Ascending aorta (tissue), 2 donors: ENCODE measurements at regions of chr3 and their contacts with region 1.

Region 1: DNA sequence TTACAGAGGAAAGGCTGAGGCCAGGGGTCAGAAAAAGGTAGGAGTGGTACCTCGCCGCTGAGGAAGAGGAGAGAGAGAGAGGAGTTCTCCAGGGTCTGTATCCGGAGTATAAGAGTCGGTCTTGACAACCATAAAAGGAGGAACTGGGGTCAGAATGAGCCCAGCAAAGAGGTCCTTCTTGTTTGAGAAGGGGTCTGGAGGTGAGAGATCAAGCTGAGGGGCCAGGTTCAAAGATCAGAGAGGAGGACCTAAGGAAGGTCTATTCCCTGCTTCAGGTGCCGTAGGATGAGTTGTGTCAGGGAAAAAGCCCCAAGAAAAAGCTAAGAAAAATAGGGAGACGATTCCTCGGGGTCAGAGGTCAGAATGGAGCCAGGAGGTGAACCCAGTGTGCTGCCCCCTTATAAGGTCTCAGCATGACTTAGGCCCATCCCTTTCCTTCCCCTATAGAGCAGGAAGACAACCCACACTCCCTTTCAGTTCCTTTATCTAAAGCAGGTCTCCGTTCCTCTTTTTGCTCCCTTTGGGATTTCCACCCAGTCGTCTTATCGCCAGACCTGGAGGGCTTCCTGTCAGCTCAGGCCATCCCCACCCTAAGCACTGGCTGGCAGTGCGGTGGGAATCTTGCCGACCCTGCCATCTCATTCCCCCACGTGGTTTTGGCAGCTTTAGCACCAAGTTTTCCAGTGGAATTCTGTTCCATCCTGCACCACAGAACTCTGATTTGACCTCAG is 651 bp downstream of the MTMR14 start:
- DNase-seq: peak in 1 of 2 donors; percentile 61
- H3K4me3 ChIP-seq: peak overlapping the region; percentile 92 to 97
- H3K27ac ChIP-seq: peak overlapping the region; percentile 86 to 87
- H3K4me1 ChIP-seq: peaks cover 3 to 5% of the 10 kb centered on the region in 2 donors
- H3K27me3 ChIP-seq: no peaks in the 10 kb centered on the region
- CTCF ChIP-seq: no peak

Region 2: DNA sequence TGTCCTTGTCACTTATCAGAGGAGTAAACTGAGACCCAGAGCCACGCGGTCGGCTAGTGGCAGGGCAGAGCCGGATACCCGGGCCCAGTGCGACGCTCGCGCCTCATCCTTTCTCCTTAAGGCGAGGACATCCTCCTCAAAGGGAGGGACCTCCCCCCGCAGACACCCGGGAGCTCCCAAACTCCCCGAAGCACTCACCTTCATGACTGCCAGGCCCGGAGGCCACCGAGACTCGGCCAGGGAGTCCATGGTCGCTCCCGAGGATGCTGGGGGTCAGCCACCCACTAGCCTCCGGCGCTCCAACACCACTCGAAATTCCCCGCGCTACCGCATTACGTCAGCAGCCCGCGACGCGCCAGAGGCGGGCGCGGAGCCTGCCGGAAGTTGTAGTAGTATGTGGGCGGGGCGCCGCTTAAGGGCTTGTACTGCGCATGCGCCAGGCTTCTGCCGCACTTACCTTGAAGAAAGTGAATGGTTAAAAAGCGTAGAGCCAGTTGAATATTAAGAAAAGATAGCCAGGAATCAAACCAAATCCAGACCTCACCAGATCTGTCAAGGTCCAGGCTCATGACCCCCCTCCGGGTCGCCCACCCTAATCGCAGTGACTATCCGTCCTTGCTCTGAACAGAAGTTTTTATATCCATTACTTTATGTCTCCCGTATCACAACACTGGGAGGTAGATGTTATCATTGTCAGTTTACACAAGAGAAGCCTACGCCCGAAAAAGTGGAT is 686.7 kb before region 1 on chr3 and contains the start of gene RAD18:
- intact Hi-C with region 1: loop called (anchors 5 kb)
- DNase-seq: peak; percentile 59 to 95
- H3K4me3 ChIP-seq: peak within 1 kb of the TSS; percentile 81 to 82
- H3K27ac ChIP-seq: peak within 1 kb of the TSS; percentile 65 to 79
- H3K4me1 ChIP-seq: peaks cover 0 to 13% of the 10 kb centered on the region in 2 donors
- H3K27me3 ChIP-seq: no peaks in the 10 kb centered on the region
- CTCF ChIP-seq: no peak
- total RNA-seq, gene RAD18: 0.75 TPM

Region 3: DNA sequence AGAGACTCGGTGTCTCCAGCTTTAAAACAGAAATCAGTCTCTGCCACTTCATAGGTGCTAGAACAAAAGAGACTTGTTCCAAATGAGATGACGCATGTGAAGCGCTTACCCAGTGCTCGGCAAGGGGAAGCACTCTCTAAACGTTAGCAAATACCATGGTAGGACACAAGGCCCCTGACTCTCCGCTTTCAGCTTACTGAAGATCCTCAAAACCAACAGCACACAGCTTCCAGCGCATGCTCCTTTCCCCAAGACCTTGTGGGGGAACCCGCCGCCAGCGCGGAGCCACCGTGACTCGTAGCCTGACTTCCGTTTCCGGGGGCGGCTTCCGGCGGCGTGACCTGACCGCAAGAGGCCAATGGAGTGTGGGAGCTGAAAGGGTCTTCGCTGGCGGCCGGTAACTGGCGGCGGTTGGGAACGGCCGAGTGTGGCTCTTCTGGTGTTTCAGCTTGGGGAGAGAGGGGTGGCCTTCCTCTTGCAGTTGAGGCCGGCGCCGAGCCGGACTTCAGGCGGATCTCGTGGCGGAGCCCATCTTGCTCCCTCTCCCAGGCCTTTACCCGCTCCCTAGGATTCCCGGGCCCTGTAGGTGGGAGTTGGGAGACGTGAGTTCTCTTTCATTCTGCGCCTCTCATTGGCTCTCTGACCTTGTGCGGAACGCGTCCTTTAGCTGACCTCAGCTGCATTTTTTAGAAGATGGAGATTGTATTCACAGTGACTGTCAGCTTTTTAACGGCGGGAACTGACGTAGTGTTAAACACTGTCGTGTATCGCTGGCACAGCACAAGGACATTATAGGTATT is 287.0 kb before region 1 on chr3 and contains the start of gene THUMPD3:
- intact Hi-C with region 1: loop called (anchors 5 kb)
- DNase-seq: peak; percentile 74 to 95
- H3K4me3 ChIP-seq: peak within 1 kb of the TSS; percentile 66 to 75
- H3K27ac ChIP-seq: peak within 1 kb of the TSS; percentile 80 to 94
- H3K4me1 ChIP-seq: peaks cover 0 to 17% of the 10 kb centered on the region in 2 donors
- H3K27me3 ChIP-seq: no peaks in the 10 kb centered on the region
- CTCF ChIP-seq: no peak
- total RNA-seq, gene THUMPD3: 24.4 TPM

Region 4: DNA sequence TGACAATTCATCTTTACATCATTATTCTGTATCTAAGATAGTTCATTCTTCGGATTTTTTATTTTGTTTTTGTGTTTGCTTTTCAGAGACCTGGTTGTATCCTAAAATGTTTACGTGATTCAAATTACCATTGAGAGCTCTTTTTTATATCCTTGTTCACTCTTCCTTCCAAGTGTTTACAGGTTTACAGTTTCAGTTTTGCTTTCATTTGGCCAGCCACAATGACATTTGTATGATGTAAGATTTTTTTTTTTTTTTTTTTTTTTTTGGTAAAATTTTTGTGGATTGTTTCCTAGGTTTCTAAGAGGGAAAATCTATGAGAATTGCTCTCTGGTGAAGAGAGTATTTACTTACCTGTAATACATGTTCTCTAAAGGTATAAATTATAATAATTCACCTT is 197.5 kb before region 1 on chr3:
- intact Hi-C with region 1: no loop called
- DNase-seq: no peak
- H3K4me3 ChIP-seq: no peak overlapping the region
- H3K27ac ChIP-seq: no peak overlapping the region
- H3K4me1 ChIP-seq: no peaks in the 10 kb centered on the region
- H3K27me3 ChIP-seq: no peaks in the 10 kb centered on the region
- CTCF ChIP-seq: no peak

Region 5: DNA sequence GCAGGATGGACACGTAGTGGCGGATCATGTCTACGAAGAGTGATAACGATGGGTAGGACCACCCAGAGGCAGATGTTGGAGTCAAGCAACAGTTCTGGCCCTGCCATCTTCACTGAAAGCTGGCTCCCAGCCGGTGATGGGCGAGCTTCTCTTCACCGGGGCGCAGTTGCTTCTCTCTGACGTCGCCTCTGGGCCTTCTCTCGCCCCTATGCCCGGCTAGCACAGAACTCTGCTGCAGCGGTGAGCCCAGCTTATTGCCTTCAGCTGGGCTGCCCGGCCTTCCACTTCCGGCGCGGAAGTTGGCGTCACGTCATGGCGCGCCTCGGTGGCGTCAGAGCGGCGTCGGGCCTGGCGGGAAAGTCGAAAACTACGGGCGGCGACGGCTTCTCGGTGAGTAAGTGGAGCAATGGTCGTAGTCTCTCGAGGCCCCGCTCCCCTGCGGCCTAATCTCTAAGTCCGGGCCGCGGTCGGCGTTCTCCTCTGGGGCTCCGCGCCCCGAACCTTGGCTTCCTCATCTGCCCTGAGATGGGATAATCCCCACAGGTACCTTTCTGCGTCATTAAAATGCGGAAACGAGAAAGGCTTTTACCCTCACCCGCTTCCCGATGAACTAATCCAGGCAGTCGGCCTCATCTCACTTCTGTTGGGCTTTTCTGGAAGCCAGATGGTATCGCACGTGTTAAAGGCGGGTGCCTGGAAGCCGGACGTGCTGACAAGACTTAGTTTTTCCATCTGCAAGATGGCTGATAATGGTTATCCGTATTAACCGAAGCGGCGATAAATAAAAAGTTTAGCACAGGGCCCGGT is 376.3 kb after region 1 on chr3 and contains the start of gene FANCD2:
- intact Hi-C with region 1: loop called (anchors 1 kb)
- DNase-seq: peak; percentile 56 to 93
- H3K4me3 ChIP-seq: peak within 1 kb of the TSS; percentile 72 to 83
- H3K27ac ChIP-seq: peak within 1 kb of the TSS; percentile 59 to 62
- H3K4me1 ChIP-seq: peaks cover 7 to 22% of the 10 kb centered on the region in 2 donors
- H3K27me3 ChIP-seq: no peaks in the 10 kb centered on the region
- CTCF ChIP-seq: no peak
- total RNA-seq, gene FANCD2: 54.6 TPM

Region 6: DNA sequence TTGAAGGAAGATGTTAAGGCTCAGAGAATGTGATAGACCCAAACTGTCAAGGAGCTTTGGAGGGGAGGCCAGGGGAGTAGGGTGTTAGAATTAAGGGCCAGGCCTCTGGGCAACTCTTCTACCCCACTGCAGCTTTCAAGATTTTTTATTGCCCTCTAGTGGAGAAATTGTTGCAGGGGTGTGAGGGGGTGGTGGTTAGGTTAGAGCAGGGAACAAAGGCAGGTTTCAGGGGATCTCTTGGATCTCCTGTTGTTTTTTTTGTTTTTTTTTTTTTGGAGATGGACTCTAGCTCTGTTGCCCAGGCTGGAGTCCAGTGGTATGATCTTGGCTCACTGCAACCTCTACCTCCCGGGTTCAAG is 672.4 kb after region 1 on chr3:
- intact Hi-C with region 1: loop called (anchors 5 kb)
- DNase-seq: no peak
- H3K4me3 ChIP-seq: no peak overlapping the region
- H3K27ac ChIP-seq: no peak overlapping the region
- H3K4me1 ChIP-seq: peaks cover 8 to 14% of the 10 kb centered on the region in 2 donors
- H3K27me3 ChIP-seq: no peaks in the 10 kb centered on the region
- CTCF ChIP-seq: no peak

Region 7: GRCh38 chr3:11509173-11510000 is 1859.4 kb after region 1 on chr3:
- intact Hi-C with region 1: no loop called
- DNase-seq: peak; percentile 55 to 91
- H3K4me3 ChIP-seq: peak overlapping the region in 1 of 2 donors; percentile 30
- H3K27ac ChIP-seq: peak overlapping the region; percentile 89 to 97
- H3K4me1 ChIP-seq: peaks cover 18 to 45% of the 10 kb centered on the region in 2 donors
- H3K27me3 ChIP-seq: no peaks in the 10 kb centered on the region
- CTCF ChIP-seq: peak in 2 of 3 experiments; percentile 13 to 26